Caco-2 (cell line): ENCODE measurements at regions of chr20 and their contacts with region 1.

Region 1: DNA sequence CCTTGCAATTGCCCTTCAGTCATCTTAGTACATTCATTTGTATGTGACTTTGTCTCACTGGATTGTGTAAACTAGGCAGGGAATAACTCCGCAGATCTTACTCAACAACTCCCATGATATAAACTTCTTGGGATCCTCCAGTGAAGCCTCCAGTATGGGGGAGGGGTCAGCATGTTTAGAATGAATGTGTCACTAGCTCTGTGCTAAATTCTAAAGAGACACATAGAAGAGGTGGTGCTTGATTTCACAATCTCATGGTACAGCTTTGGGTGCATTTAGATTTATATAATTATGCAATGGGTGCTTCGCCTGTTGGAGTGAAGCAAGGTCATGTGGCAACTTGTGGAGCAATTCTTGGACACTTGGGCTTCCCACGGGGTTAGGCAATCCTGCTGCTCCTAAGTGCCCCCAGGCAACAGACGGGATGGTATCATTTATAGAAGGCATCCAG is 40.3 kb downstream of the SLC24A3 start:
- DNase-seq: peak in 1 of 2 experiments; percentile 39
- H3K4me3 ChIP-seq: no peak overlapping the region
- H3K4me3 Mint-ChIP-seq: no peak overlapping the region
- H3K27ac Mint-ChIP-seq: peak overlapping the region; percentile 10
- H3K4me1 ChIP-seq: 0 out of 2 replicates have a peak, but pooled peaks cover 9% of the 10 kb centered on the region
- H3K4me1 Mint-ChIP-seq: peaks cover 11% of the 10 kb centered on the region
- H3K27me3 ChIP-seq: no peaks in the 10 kb centered on the region
- H3K27me3 Mint-ChIP-seq: peaks cover 3% of the 10 kb centered on the region
- CTCF ChIP-seq: no peak

Region 2: DNA sequence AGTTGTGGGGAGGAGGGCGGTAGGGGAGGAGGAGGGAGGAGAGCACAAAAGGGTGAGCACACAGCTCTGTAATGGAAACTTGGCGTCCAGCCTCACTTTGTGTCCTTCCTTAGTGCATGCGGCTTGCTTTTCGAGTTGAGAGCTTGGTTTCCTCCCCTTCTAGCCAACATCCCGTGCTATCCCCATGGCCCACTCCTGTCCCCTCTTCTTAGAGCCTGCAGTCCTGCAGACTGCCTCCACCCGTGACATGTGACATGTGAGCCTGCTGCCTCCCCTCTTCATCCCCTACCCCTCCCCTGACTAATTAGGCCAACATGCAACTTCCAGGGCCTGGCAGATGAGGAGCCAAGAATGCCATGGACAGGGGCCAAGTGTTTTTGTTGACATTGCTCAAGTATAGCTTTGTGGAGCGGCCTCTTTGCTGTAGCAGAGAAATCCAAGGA is 23.0 kb after region 1 on chr20:
- CTCF ChIA-PET with region 1: no interaction called
- POLR2A ChIA-PET with region 1: no interaction called
- intact Hi-C with region 1: loop called (anchors 2 kb)
- DNase-seq: no peak
- H3K4me3 ChIP-seq: no peak overlapping the region
- H3K4me3 Mint-ChIP-seq: peak overlapping the region; percentile 61
- H3K27ac Mint-ChIP-seq: peak overlapping the region; percentile 90
- H3K4me1 ChIP-seq: peaks cover 57% of the 10 kb centered on the region
- H3K4me1 Mint-ChIP-seq: peaks cover 36% of the 10 kb centered on the region
- H3K27me3 ChIP-seq: no peaks in the 10 kb centered on the region
- H3K27me3 Mint-ChIP-seq: no peaks in the 10 kb centered on the region
- CTCF ChIP-seq: no peak

Region 3: DNA sequence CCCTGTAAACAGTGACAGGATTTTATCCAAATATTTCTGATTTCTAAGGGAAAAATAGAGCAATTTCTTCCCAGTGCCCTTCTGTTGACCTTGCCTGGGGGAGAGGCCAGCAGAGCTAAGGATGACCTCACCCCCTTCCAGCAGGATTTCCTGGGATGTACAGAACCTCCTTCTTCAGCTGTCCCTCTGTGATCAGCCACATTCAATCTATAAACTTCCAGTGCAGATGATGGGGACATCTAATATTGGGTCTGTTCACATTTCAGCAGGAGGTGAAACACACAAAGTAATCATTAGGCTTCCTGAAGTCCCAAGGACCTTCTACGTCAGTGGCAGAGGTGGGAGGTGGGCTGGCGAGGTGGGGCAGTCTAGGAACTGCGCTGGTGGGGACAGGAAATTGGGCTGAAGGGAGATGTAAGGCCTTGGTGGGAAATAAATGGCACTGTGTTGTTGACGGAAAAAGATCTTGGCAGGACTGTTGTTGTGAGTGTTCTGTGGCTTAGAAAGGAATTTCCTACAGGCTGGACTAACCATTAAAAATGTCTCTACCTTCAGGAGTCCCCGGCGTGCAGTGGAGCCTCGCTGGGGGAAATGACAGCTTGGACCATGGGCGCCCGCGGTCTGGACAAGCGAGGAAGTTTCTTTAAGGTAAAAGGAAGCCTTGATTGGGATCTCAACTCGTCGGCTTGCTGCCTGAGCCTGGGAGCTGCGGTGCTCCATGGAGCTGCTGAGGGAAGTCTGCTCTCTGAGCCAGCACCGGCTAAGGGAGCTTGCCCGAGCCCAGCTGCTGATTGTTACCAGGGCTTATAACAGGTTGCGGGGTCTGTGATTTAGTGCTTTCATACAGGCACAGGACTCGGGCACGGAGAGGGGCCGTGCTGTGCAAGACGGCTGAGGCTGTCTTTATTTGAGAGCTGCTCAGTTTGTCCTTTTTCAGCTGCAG is 636.6 kb after region 1 on chr20:
- CTCF ChIA-PET with region 1: no interaction called
- POLR2A ChIA-PET with region 1: no interaction called
- intact Hi-C with region 1: no loop called
- DNase-seq: no peak
- H3K4me3 ChIP-seq: no peak overlapping the region
- H3K4me3 Mint-ChIP-seq: no peak overlapping the region
- H3K27ac Mint-ChIP-seq: peak overlapping the region; percentile 40
- H3K4me1 ChIP-seq: peaks cover 47% of the 10 kb centered on the region
- H3K4me1 Mint-ChIP-seq: peaks cover 36% of the 10 kb centered on the region
- H3K27me3 ChIP-seq: no peaks in the 10 kb centered on the region
- H3K27me3 Mint-ChIP-seq: no peaks in the 10 kb centered on the region
- CTCF ChIP-seq: no peak